H1 (cell line): ENCODE measurements at regions of chr11 and their contacts with region 1.

Region 1: GRCh38 chr11:95089620-95090542 is at the start of gene ENDOD1:
- DNase-seq: peak in 1 of 2 experiments; percentile 83
- H3K4me3 ChIP-seq: peak within 1 kb of the TSS; percentile 72 to 96 (median 86)
- H3K27ac ChIP-seq: no peak within 1 kb of the TSS
- H3K4me1 ChIP-seq: peaks cover 0 to 6% (median 3%) of the 10 kb centered on the region in 4 experiments; a peak in 6 of 7 replicates
- H3K27me3 ChIP-seq: peaks cover 4 to 32% (median 25%) of the 10 kb centered on the region in 4 experiments
- CTCF ChIP-seq: no peak
- EP300 ChIP-seq: no peak
- POLR2A ChIP-seq: 0 out of 3 replicates have a peak, but pooled peaks of 1 of the 2 experiments have one; percentile 40
- RAD21 ChIP-seq: peak in 1 of 2 experiments; percentile 0; a peak in 1 of 4 replicates
- total RNA-seq, gene ENDOD1: 2.2 and 2.5 TPM in 2 replicates

Region 2: GRCh38 chr11:95067039-95067840 is 22.6 kb before region 1 on chr11:
- CTCF ChIA-PET with region 1: interaction called, 84 read pairs
- POLR2A ChIA-PET with region 1: interaction called, 44 read pairs
- DNase-seq: peak in 1 of 2 experiments; percentile 83
- H3K4me3 ChIP-seq: peak overlapping the region; percentile 70 to 85 (median 72)
- H3K27ac ChIP-seq: peak overlapping the region; percentile 62; the same call in 1 of the 2 replicates
- H3K4me1 ChIP-seq: peaks cover 0 to 2% (median 0%) of the 10 kb centered on the region in 4 experiments; a peak in 2 of 7 replicates
- H3K27me3 ChIP-seq: no peaks in the 10 kb centered on the region
- CTCF ChIP-seq: peak; percentile 38 to 76 (median 39)
- EP300 ChIP-seq: no peak
- POLR2A ChIP-seq: peak; percentile 62 to 78
- RAD21 ChIP-seq: 0 out of 4 replicates have a peak, but pooled peaks have one; percentile 4 to 13

Region 3: GRCh38 chr11:95076416-95076815 is 13.5 kb before region 1 on chr11:
- CTCF ChIA-PET with region 1: interaction called, 84 read pairs
- POLR2A ChIA-PET with region 1: interaction called, 8 read pairs
- DNase-seq: no peak
- H3K4me3 ChIP-seq: no peak overlapping the region
- H3K27ac ChIP-seq: no peak overlapping the region
- H3K4me1 ChIP-seq: 0 out of 7 replicates have a peak, but pooled peaks cover 0 to 2% (median 0%) of the 10 kb centered on the region in 4 experiments
- H3K27me3 ChIP-seq: no peaks in the 10 kb centered on the region
- CTCF ChIP-seq: no peak
- EP300 ChIP-seq: no peak
- POLR2A ChIP-seq: no peak
- RAD21 ChIP-seq: no peak

Region 4: DNA sequence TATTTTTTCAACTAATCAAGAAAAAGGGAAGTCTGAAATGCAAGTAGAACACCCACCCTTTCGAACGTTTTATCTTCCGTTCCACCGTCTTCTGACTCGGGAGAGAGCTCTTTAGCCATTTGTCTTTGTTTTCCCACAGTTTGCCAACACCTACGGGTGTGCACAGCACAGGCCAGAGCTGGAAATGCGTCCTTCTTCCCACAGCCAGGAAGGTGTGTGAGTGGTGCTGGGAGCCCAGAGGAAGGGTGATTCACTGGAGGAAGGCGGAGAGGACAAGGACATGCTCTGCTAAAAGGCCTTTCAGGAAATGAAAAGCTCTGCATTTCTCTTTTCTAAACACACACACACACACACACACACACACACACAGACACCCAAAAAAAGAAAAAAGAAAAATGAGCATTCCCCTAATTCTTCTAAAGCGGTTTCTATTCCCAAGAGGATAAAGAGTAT is 18.3 kb after region 1 on chr11:
- CTCF ChIA-PET with region 1: interaction called, 127 read pairs
- POLR2A ChIA-PET with region 1: interaction called, 5 read pairs
- DNase-seq: no peak
- H3K4me3 ChIP-seq: no peak overlapping the region
- H3K27ac ChIP-seq: no peak overlapping the region
- H3K4me1 ChIP-seq: peaks cover 0 to 11% (median 3%) of the 10 kb centered on the region in 4 experiments; a peak in 5 of 7 replicates
- H3K27me3 ChIP-seq: no peaks in the 10 kb centered on the region
- CTCF ChIP-seq: no peak
- EP300 ChIP-seq: no peak
- POLR2A ChIP-seq: no peak
- RAD21 ChIP-seq: no peak

Region 5: GRCh38 chr11:95138448-95138847 is 48.6 kb after region 1 on chr11:
- CTCF ChIA-PET with region 1: interaction called, 11 read pairs
- POLR2A ChIA-PET with region 1: interaction called, 3 read pairs
- DNase-seq: no peak
- H3K4me3 ChIP-seq: no peak overlapping the region
- H3K27ac ChIP-seq: no peak overlapping the region
- H3K4me1 ChIP-seq: no peaks in the 10 kb centered on the region
- H3K27me3 ChIP-seq: peaks cover 0 to 5% (median 1%) of the 10 kb centered on the region in 4 experiments; a peak in 2 of 7 replicates
- CTCF ChIP-seq: peak in 1 of 3 experiments; percentile 6; a peak in 1 of 4 replicates
- EP300 ChIP-seq: no peak
- POLR2A ChIP-seq: no peak
- RAD21 ChIP-seq: peak; percentile 16 to 45; a peak in 3 of 4 replicates